ENCODE measurements at regions of chr12 and their contacts with region 1.

Region 1: DNA sequence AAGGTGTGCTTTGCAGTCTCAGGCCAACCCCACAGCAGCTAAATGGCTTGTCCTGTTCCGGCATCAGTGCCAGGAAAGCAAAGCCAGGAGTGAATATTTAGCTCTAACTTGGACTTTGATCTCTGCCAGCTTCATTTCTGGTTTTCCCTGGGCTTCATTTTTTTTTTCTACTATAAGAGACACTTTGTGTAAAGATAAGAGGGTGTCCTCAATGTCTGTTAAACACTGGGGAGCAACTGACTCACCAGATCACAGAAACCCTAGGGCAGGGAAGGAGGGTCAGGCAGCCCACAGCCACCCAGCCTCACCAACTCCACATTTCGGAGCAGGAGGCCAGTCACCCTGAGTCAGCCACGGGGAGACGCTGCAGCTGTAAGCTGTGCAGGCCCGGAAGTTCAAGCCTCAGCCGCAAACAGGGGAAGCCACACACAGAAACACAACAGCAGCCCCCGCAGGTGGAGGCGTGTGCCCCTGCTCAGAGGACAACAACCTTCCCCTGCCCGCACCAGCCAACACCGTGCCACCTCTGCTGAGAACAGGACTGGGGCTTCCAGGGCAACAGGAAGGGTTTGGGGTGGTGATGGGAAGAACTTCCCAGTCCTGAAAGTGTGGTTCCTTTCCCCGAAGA is 6.3 kb downstream of the TNFRSF1A start:
- DNase-seq: peak; percentile 75
- ATAC-seq: peak; percentile 27
- H3K4me3 ChIP-seq: peak overlapping the region; percentile 43; the same call in 1 of the 2 replicates
- H3K27ac ChIP-seq: peak overlapping the region; percentile 100
- H3K4me1 ChIP-seq: peaks cover 73% of the 10 kb centered on the region
- H3K27me3 ChIP-seq: no peaks in the 10 kb centered on the region
- CTCF ChIP-seq: peak; percentile 63

Region 2: DNA sequence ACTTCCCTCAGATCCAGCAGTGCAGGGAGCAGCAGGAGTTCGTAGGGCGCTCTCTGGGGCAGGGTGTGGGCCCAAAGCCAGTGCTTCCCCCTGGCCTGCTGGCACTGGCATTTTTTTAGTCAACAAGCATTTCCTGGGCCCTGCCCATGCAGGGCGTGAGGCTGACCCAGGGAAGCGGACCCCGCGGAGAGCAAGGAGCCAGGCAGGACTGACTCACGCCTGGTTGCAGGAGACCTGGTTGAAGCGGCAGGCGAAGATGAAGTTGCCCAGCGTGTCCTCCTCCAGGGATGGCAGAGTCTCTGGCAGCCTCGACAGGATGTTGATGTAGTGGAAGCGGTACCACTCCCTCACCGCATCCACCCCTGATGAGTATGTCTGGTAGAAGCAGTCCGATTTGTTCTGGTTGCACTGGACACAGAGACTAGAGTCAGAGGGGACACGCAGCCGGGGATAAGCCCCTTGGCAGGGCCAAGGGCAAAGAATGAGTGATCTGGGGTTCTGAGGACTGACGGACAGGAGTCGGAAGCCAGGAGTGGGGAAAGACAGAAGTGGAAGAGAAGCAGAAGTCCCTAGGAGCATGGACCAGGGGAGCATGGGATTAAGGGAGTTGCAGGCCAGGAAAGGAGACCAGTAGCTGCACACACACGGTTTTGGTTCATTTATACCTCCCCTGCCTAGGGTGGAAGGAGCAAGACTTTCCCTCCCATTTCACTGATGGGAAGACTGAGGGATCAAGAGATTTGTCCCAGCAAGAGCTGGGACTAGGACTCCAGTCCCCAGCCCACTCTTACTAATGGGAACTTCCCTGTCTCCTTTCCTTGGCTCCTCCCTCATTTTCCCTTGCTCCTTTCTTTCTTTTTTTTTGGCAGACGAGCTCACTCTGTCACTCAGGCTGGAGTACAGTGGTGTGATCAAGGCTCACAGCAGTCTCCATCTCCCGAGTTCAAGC is 26.5 kb after region 1 on chr12:
- CTCF ChIA-PET with region 1: interaction called, 9 read pairs
- POLR2A ChIA-PET with region 1: interaction called, 16 read pairs
- intact Hi-C with region 1: loop called (anchors 1 kb)
- DNase-seq: peak; percentile 89
- ATAC-seq: peak; percentile 70
- H3K4me3 ChIP-seq: peak overlapping the region; percentile 30; the same call in 1 of the 2 replicates
- H3K27ac ChIP-seq: peak overlapping the region; percentile 93
- H3K4me1 ChIP-seq: peaks cover 40% of the 10 kb centered on the region
- H3K27me3 ChIP-seq: no peaks in the 10 kb centered on the region
- CTCF ChIP-seq: no peak

Region 3: GRCh38 chr12:6423267-6424007 is 87.9 kb after region 1 on chr12:
- CTCF ChIA-PET with region 1: no interaction called
- POLR2A ChIA-PET with region 1: no interaction called
- intact Hi-C with region 1: loop called (anchors 2 kb)
- DNase-seq: peak; percentile 84
- ATAC-seq: peak; percentile 95
- H3K4me3 ChIP-seq: no peak overlapping the region
- H3K27ac ChIP-seq: no peak overlapping the region
- H3K4me1 ChIP-seq: peaks cover 9% of the 10 kb centered on the region
- H3K27me3 ChIP-seq: no peaks in the 10 kb centered on the region
- CTCF ChIP-seq: peak; percentile 77

Region 4: DNA sequence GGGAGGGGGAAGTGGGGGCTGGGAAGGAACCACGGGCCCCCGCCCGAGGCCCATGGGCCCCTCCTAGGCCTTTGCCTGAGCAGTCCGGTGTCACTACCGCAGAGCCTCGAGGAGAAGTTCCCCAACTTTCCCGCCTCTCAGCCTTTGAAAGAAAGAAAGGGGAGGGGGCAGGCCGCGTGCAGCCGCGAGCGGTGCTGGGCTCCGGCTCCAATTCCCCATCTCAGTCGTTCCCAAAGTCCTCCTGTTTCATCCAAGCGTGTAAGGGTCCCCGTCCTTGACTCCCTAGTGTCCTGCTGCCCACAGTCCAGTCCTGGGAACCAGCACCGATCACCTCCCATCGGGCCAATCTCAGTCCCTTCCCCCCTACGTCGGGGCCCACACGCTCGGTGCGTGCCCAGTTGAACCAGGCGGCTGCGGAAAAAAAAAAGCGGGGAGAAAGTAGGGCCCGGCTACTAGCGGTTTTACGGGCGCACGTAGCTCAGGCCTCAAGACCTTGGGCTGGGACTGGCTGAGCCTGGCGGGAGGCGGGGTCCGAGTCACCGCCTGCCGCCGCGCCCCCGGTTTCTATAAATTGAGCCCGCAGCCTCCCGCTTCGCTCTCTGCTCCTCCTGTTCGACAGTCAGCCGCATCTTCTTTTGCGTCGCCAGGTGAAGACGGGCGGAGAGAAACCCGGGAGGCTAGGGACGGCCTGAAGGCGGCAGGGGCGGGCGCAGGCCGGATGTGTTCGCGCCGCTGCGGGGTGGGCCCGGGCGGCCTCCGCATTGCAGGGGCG is 198.5 kb after region 1 on chr12 and contains the start of gene GAPDH:
- CTCF ChIA-PET with region 1: no interaction called
- POLR2A ChIA-PET with region 1: interaction called, 9 read pairs
- intact Hi-C with region 1: loop called (anchors 2 kb)
- DNase-seq: peak; percentile 92
- ATAC-seq: peak; percentile 48
- H3K4me3 ChIP-seq: peak within 1 kb of the TSS; percentile 97
- H3K27ac ChIP-seq: peak within 1 kb of the TSS; percentile 99
- H3K4me1 ChIP-seq: peaks cover 38% of the 10 kb centered on the region
- H3K27me3 ChIP-seq: no peaks in the 10 kb centered on the region
- CTCF ChIP-seq: no peak
- total RNA-seq, gene GAPDH: 6,976 and 7,326 TPM in 2 replicates

Region 5: GRCh38 chr12:6723607-6724396 is 388.2 kb after region 1 on chr12 and contains the start of gene COPS7A:
- CTCF ChIA-PET with region 1: no interaction called
- POLR2A ChIA-PET with region 1: no interaction called
- intact Hi-C with region 1: no loop called
- DNase-seq: peak; percentile 96
- ATAC-seq: peak; percentile 96
- H3K4me3 ChIP-seq: peak within 1 kb of the TSS; percentile 85
- H3K27ac ChIP-seq: peak within 1 kb of the TSS; percentile 64
- H3K4me1 ChIP-seq: peaks cover 17% of the 10 kb centered on the region
- H3K27me3 ChIP-seq: no peaks in the 10 kb centered on the region
- CTCF ChIP-seq: no peak
- total RNA-seq, gene COPS7A: 82.3 and 86.9 TPM in 2 replicates

Measured in PC-3 (cell line).